ENCODE measurements at regions of chr1 and their contacts with region 1.

Region 1: GRCh38 chr1:226547754-226548191 is 791 bp upstream of the STUM start:
- DNase-seq: peak; percentile 86
- ATAC-seq: peak; percentile 93
- H3K4me3 ChIP-seq: no peak overlapping the region
- H3K27ac ChIP-seq: no peak overlapping the region
- H3K4me1 ChIP-seq: peaks cover 2% of the 10 kb centered on the region; the same call in 1 of the 2 replicates
- H3K27me3 ChIP-seq: peaks cover 54% of the 10 kb centered on the region
- CTCF ChIP-seq: peak; percentile 94
- POLR2A ChIP-seq: no peak
- RAD21 ChIP-seq: peak; percentile 83

Region 2: GRCh38 chr1:226606311-226607267 is 58.8 kb after region 1 on chr1:
- CTCF ChIA-PET with region 1: no interaction called
- POLR2A ChIA-PET with region 1: no interaction called
- dilution Hi-C with region 1: no loop called
- in situ Hi-C with region 1: no loop called
- intact Hi-C with region 1: loop called (anchors 1 kb)
- DNase-seq: no peak
- ATAC-seq: peak; percentile 38
- H3K4me3 ChIP-seq: no peak overlapping the region
- H3K27ac ChIP-seq: no peak overlapping the region
- H3K4me1 ChIP-seq: peaks cover 4% of the 10 kb centered on the region; the same call in 1 of the 2 replicates
- H3K27me3 ChIP-seq: peaks cover 18% of the 10 kb centered on the region
- CTCF ChIP-seq: no peak
- POLR2A ChIP-seq: no peak
- RAD21 ChIP-seq: no peak

Region 3: GRCh38 chr1:226626577-226626956 is 78.8 kb after region 1 on chr1:
- CTCF ChIA-PET with region 1: interaction called, 4 read pairs
- POLR2A ChIA-PET with region 1: no interaction called
- dilution Hi-C with region 1: no loop called
- in situ Hi-C with region 1: no loop called
- intact Hi-C with region 1: loop called (anchors 5 kb)
- DNase-seq: peak; percentile 59
- ATAC-seq: peak; percentile 98
- H3K4me3 ChIP-seq: no peak overlapping the region
- H3K27ac ChIP-seq: no peak overlapping the region
- H3K4me1 ChIP-seq: no peaks in the 10 kb centered on the region
- H3K27me3 ChIP-seq: peaks cover 1% of the 10 kb centered on the region
- CTCF ChIP-seq: peak; percentile 89
- POLR2A ChIP-seq: no peak
- RAD21 ChIP-seq: peak; percentile 78

Region 4: DNA sequence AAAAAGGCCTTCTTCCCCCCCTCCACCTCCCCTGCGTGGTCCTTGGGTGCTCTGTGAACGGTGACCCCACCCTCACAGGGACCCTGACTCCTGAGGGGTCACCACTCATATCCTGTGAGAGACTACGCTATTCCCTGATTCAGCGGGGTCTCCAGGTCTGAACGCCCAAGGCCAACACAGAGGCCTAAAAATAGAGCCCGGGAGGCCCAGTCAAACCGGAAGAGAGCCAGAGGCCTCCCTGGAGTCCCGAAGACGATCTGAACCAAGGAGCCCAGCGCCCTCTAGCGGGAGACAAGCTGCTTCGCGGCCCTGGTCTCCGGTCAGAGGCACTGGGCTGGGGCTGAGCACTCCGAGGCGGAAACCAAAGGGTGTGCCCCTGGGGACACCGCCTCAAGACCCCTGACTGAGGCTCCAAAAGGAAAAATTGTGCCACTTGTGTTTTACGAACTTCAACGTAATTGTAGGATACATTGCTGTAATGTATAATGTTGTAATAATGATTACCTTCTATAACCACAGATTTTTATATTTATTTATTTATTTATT is 280.3 kb after region 1 on chr1:
- CTCF ChIA-PET with region 1: no interaction called
- POLR2A ChIA-PET with region 1: no interaction called
- dilution Hi-C with region 1: no loop called
- in situ Hi-C with region 1: no loop called
- intact Hi-C with region 1: loop called (anchors 1 kb)
- DNase-seq: peak; percentile 93
- ATAC-seq: peak; percentile 100
- H3K4me3 ChIP-seq: no peak overlapping the region
- H3K27ac ChIP-seq: peak overlapping the region; percentile 76
- H3K4me1 ChIP-seq: peaks cover 2% of the 10 kb centered on the region
- H3K27me3 ChIP-seq: peaks cover 4% of the 10 kb centered on the region; the same call in 1 of the 2 replicates
- CTCF ChIP-seq: peak; percentile 97
- POLR2A ChIP-seq: peak; percentile 51; the same call in 1 of the 2 replicates
- RAD21 ChIP-seq: peak; percentile 98

Region 5: GRCh38 chr1:226990133-226990716 is 442.5 kb after region 1 on chr1:
- CTCF ChIA-PET with region 1: no interaction called
- POLR2A ChIA-PET with region 1: no interaction called
- dilution Hi-C with region 1: no loop called
- in situ Hi-C with region 1: no loop called
- intact Hi-C with region 1: loop called (anchors 10 kb)
- DNase-seq: no peak
- ATAC-seq: no peak
- H3K4me3 ChIP-seq: no peak overlapping the region
- H3K27ac ChIP-seq: no peak overlapping the region
- H3K4me1 ChIP-seq: no peaks in the 10 kb centered on the region; the same call in 1 of the 2 replicates
- H3K27me3 ChIP-seq: no peaks in the 10 kb centered on the region
- CTCF ChIP-seq: no peak
- POLR2A ChIP-seq: no peak
- RAD21 ChIP-seq: no peak

Measured in IMR-90 (cell line).